Activated B cell treated with CpG ODN at 0.5 μM for 24 hours (primary cell): ENCODE measurements at regions of chr6 and their contacts with region 1.

Region 1: GRCh38 chr6:150641398-150642139 is 41.9 kb downstream of the PLEKHG1 start:
- DNase-seq: no peak
- ATAC-seq: peak; percentile 49
- H3K4me3 Mint-ChIP-seq: peak overlapping the region; percentile 77
- H3K27ac Mint-ChIP-seq: peak overlapping the region; percentile 91
- H3K4me1 Mint-ChIP-seq: peaks cover 90% of the 10 kb centered on the region
- H3K27me3 Mint-ChIP-seq: no peaks in the 10 kb centered on the region
- CTCF ChIP-seq: no peak

Region 2: GRCh38 chr6:150208611-150209352 is 432.8 kb before region 1 on chr6:
- CTCF ChIA-PET with region 1: no interaction called
- POLR2A ChIA-PET with region 1: no interaction called
- intact Hi-C with region 1: no loop called
- DNase-seq: no peak
- ATAC-seq: no peak
- H3K4me3 Mint-ChIP-seq: no peak overlapping the region
- H3K27ac Mint-ChIP-seq: no peak overlapping the region
- H3K4me1 Mint-ChIP-seq: peaks cover 18% of the 10 kb centered on the region
- H3K27me3 Mint-ChIP-seq: peaks cover 7% of the 10 kb centered on the region
- CTCF ChIP-seq: no peak

Region 3: GRCh38 chr6:150661216-150662007 is 19.8 kb after region 1 on chr6:
- CTCF ChIA-PET with region 1: interaction called, 3 read pairs
- POLR2A ChIA-PET with region 1: interaction called, 4 read pairs
- intact Hi-C with region 1: loop called (anchors 2 kb)
- DNase-seq: no peak
- ATAC-seq: no peak
- H3K4me3 Mint-ChIP-seq: no peak overlapping the region
- H3K27ac Mint-ChIP-seq: peak overlapping the region; percentile 39
- H3K4me1 Mint-ChIP-seq: peaks cover 64% of the 10 kb centered on the region
- H3K27me3 Mint-ChIP-seq: no peaks in the 10 kb centered on the region
- CTCF ChIP-seq: no peak